ENCODE measurements at regions of chr3 and their contacts with region 1.

Region 1: GRCh38 chr3:10758304-10759061 is 57.5 kb upstream of the SLC6A11 start:
- DNase-seq: peak; percentile 61
- H3K4me3 Mint-ChIP-seq: no peak overlapping the region
- H3K27ac Mint-ChIP-seq: no peak overlapping the region
- H3K4me1 Mint-ChIP-seq: no peaks in the 10 kb centered on the region
- H3K27me3 Mint-ChIP-seq: peaks cover 71% of the 10 kb centered on the region
- CTCF ChIP-seq: peak; percentile 65

Region 2: DNA sequence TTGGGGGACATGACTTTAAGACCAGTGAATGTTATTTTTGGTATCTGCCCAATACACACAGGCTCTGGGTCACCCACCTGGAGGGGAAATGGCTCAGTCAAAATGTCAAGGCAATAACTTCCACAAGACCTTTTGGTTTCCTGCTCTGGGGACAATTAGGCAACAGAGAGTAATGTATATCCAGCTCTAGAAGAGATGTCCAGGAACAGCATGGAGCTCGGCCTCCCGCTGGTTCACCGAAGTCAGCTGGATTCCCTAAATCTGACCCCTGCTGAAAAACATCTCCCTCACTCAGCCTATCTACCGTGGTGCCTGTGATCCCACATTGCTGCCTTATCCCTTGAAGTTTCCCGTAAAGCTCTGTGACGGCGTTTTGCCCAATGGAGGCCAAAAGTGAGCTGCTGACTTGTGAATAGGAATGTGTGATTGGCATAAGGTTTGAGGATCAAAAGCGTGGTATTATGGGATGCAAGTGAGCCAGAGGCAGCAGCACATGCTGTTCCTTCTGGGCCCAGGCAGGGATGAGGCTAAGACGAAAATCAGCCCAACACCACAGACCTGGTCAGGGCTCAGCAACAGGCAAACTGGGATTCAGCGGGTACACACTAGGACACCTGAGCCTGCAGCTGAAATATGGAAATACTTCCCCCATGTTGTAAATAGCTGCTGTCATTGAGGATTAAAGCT is 10.4 kb after region 1 on chr3:
- CTCF ChIA-PET with region 1: interaction called, 15 read pairs
- intact Hi-C with region 1: no loop called
- DNase-seq: no peak
- H3K4me3 Mint-ChIP-seq: no peak overlapping the region
- H3K27ac Mint-ChIP-seq: no peak overlapping the region
- H3K4me1 Mint-ChIP-seq: no peaks in the 10 kb centered on the region
- H3K27me3 Mint-ChIP-seq: peaks cover 57% of the 10 kb centered on the region
- CTCF ChIP-seq: no peak

Region 3: GRCh38 chr3:10804183-10804648 is 45.7 kb after region 1 on chr3:
- CTCF ChIA-PET with region 1: no interaction called
- intact Hi-C with region 1: no loop called
- DNase-seq: peak; percentile 46
- H3K4me3 Mint-ChIP-seq: no peak overlapping the region
- H3K27ac Mint-ChIP-seq: no peak overlapping the region
- H3K4me1 Mint-ChIP-seq: peaks cover 12% of the 10 kb centered on the region
- H3K27me3 Mint-ChIP-seq: peaks cover 49% of the 10 kb centered on the region
- CTCF ChIP-seq: no peak

Region 4: DNA sequence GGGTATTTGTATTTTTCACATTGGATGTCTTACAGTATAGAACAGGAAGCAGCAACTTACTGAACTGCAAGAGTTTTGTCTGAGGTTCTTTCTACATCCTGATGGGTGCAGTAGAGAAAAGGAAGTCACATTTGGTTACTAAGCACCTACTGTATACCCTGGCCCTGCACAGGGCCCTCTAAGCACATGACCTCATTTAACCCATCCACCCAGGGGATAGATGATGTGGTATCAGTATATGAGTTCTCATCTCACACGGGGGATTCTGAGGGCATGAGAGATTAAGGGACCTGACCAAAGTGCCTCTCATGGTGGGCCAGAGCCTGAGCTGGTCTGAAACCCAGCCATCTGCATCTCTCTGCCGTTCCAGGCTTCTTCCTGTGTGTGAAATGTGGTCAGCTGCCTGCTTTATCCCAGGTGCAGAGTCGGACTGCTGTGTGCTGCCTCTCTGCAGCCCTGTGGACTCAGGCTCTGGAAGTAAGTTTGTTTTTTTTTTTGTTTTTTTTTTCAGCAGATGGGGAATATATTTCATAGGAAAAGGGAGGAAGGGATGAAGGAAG is 75.5 kb after region 1 on chr3:
- CTCF ChIA-PET with region 1: no interaction called
- intact Hi-C with region 1: no loop called
- DNase-seq: no peak
- H3K4me3 Mint-ChIP-seq: no peak overlapping the region
- H3K27ac Mint-ChIP-seq: no peak overlapping the region
- H3K4me1 Mint-ChIP-seq: no peaks in the 10 kb centered on the region
- H3K27me3 Mint-ChIP-seq: peaks cover 86% of the 10 kb centered on the region
- CTCF ChIP-seq: no peak

Region 5: GRCh38 chr3:10857235-10857634 is 98.8 kb after region 1 on chr3:
- CTCF ChIA-PET with region 1: no interaction called
- intact Hi-C with region 1: no loop called
- DNase-seq: no peak
- H3K4me3 Mint-ChIP-seq: no peak overlapping the region
- H3K27ac Mint-ChIP-seq: no peak overlapping the region
- H3K4me1 Mint-ChIP-seq: no peaks in the 10 kb centered on the region
- H3K27me3 Mint-ChIP-seq: peaks cover 95% of the 10 kb centered on the region
- CTCF ChIP-seq: no peak

Region 6: DNA sequence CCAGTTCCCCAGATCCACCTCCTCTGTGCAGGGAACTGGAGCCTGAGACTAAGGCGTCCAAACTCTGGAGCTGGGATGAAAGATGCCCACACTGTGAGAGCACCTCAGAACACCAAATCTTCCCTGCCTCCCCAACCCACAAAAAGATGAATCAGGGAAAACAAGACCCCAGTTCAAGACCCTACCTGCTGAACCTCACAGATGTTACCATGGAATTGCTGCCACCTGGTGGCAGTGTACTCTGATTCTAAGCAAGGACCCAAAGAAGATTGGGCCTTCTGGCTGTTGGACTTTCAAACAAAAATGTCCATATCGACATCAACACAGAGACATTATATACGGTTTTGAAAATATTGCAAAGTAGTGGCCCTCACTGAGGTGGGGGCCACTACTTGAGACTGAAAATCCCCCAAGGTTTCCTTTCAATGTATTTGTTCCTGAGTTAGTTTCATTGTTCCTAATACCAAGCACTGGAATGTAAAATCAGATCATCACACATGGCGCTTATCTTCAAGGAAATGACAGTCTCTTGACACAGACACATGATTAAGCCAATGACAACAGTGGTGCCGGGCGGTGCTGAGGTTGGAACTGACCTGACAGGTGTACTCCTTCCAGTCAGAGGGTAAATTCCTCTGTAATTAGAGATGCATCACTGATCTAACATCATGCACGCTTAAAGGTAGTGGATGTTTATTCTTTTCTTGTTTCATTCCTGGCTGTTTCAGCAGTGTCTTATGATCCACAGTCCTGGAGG is 125.2 kb after region 1 on chr3:
- CTCF ChIA-PET with region 1: interaction called, 5 read pairs
- intact Hi-C with region 1: loop called (anchors 1 kb)
- DNase-seq: peak; percentile 28
- H3K4me3 Mint-ChIP-seq: no peak overlapping the region
- H3K27ac Mint-ChIP-seq: no peak overlapping the region
- H3K4me1 Mint-ChIP-seq: no peaks in the 10 kb centered on the region
- H3K27me3 Mint-ChIP-seq: peaks cover 96% of the 10 kb centered on the region
- CTCF ChIP-seq: peak; percentile 13

Region 7: DNA sequence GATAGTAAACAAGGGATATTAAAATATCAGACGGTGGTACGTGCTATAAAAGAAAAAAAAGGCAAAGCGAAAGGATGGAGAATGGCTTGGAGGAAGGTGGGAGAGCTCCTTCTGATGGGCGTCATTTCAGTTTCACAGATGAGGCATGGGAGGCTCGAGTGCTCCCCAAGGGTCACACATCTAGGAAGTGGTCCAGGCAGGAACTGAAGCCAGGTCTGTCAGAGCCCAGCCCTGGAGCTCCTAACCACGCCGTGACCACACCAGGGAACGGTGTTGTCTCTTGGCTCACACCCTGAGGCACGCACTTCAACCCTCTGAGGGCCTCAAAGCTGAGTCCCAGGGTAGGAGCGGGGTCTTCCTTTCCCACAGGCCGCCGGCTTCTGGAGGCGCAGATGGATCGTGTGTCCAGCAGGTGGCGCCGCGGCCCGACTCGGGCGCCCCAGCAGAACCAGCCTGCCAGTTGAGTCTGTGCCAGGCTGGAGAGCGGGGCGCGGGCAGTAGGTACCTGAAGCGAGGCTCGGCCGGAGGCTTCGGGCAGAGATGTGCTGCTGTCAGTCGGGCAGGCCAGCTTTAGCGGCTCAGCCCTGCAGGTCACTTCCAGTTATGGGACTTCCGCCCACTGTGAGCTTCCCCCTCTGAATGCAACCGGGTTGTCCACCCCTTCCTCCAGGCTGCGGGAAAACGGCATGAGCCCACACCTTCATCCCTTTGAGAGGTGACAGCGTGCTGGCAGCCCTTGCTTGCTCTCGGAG is 302.2 kb after region 1 on chr3:
- CTCF ChIA-PET with region 1: no interaction called
- intact Hi-C with region 1: loop called (anchors 1 kb)
- DNase-seq: peak; percentile 78
- H3K4me3 Mint-ChIP-seq: no peak overlapping the region
- H3K27ac Mint-ChIP-seq: no peak overlapping the region
- H3K4me1 Mint-ChIP-seq: no peaks in the 10 kb centered on the region
- H3K27me3 Mint-ChIP-seq: peaks cover 14% of the 10 kb centered on the region
- CTCF ChIP-seq: peak; percentile 91

Region 8: GRCh38 chr3:11335056-11335608 is 576.6 kb after region 1 on chr3:
- CTCF ChIA-PET with region 1: no interaction called
- intact Hi-C with region 1: loop called (anchors 5 kb)
- DNase-seq: peak; percentile 44
- H3K4me3 Mint-ChIP-seq: no peak overlapping the region
- H3K27ac Mint-ChIP-seq: no peak overlapping the region
- H3K4me1 Mint-ChIP-seq: no peaks in the 10 kb centered on the region
- H3K27me3 Mint-ChIP-seq: no peaks in the 10 kb centered on the region
- CTCF ChIP-seq: no peak